Keratinocyte (primary cell): ENCODE measurements at regions of chr20 and their contacts with region 1.

Region 1: DNA sequence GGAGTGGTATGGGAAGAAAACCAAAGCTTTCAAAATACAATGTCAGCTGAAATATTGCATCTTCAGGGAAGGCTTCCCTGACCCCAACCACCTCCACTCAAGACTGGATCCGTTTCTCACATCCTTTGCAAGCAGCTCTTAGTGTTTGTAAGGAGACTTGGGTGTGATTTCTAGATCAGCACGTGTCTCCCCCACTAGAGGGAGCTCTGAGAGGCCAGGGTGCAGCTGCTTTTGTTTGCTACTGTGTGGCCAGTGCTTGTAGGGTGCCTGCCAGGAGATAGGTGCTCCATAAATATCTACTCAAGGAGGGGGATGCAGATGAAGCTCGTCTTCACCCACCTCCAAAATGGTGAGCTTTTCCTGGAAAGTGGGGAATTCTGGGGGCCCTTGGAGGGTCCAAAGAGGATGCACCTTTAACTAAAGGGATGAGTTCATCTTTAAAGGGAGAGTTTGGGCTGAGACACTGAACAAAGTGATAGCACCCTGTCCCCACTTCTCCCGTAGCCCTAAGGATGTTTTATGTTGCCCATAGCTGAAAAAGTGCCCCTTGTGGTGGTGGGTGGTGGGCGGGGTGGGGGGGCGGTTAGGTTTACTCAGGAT is 52.6 kb upstream of the MAFB start:
- DNase-seq: no peak
- H3K4me3 ChIP-seq: no peak overlapping the region
- H3K27ac ChIP-seq: no peak overlapping the region
- H3K4me1 ChIP-seq: no peaks in the 10 kb centered on the region
- H3K27me3 ChIP-seq: peaks cover 6% of the 10 kb centered on the region
- CTCF ChIP-seq: peak; percentile 82 to 92 (median 85)

Region 2: DNA sequence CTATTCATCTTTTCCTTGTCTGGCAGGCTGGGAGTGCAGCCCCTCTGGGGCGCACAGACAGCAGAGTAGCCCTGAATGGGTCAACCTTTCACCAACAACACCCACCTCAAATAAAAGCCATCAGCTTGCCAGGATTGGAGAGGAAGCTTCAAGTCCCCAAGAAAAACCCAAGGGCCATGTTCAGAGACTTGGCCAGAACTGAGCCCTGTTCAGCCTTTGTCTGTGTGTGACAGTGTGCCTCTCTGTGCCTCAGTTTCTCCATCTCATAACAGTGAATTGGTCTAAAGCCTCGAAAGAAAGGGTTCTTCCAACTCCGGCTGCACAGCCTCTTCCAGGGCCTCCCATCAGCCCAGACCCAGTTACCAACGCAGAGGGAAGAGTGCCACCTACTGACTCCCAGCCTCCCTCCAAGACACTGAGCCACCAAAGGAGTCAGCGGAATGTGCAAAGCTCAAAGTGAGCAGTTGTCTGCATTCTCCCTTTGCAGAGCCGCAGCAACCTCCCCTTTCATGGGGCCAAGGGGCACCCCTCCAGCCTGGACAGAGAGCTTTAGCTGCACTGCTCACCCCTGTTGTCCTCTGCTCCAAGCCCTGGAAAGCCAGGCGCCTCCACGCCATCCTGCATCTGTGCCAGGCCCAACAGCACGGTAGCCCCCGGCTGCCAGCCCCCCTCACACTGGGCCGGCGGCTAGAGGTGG is 204.3 kb after region 1 on chr20:
- dilution Hi-C with region 1: loop called (anchors 25 kb)
- DNase-seq: no peak
- H3K4me3 ChIP-seq: no peak overlapping the region
- H3K27ac ChIP-seq: no peak overlapping the region
- H3K4me1 ChIP-seq: peaks cover 15% of the 10 kb centered on the region
- H3K27me3 ChIP-seq: peaks cover 4% of the 10 kb centered on the region
- CTCF ChIP-seq: peak; percentile 59 to 84 (median 82)

Region 3: GRCh38 chr20:41424546-41424945 is 682.9 kb after region 1 on chr20:
- dilution Hi-C with region 1: no loop called
- DNase-seq: no peak
- H3K4me3 ChIP-seq: no peak overlapping the region
- H3K27ac ChIP-seq: no peak overlapping the region
- H3K4me1 ChIP-seq: peaks cover 9% of the 10 kb centered on the region
- H3K27me3 ChIP-seq: no peaks in the 10 kb centered on the region
- CTCF ChIP-seq: no peak